ENCODE measurements at regions of chr1 and their contacts with region 1.

Region 1: DNA sequence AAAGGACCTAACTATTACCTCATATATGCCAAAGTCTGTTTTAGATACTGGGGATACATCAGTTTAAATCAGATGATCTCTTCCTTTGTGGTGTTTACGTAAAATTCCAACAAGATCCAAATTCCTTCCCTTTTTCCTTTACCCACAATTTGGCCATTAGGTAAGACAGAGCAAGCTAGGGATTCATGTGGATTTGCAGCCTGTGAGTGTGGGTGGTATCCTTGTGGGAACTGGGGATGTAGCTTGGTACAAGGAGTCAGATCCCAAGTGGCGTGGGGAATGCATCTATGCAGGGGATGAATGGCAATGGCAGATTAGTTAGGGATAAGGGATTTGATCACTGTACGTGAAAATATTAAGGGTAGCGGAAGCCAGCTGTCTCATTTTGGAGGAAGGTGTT is 9.8 kb upstream of the STRIP1 start:
- DNase-seq: no peak
- ATAC-seq: no peak
- H3K4me3 ChIP-seq: no peak overlapping the region
- H3K4me3 Mint-ChIP-seq: no peak overlapping the region
- H3K27ac ChIP-seq: no peak overlapping the region
- H3K27ac Mint-ChIP-seq: no peak overlapping the region
- H3K4me1 ChIP-seq: peaks cover 3% of the 10 kb centered on the region
- H3K4me1 Mint-ChIP-seq: peaks cover 2% of the 10 kb centered on the region
- H3K27me3 ChIP-seq: no peaks in the 10 kb centered on the region
- H3K27me3 Mint-ChIP-seq: no peaks in the 10 kb centered on the region
- CTCF ChIP-seq: no peak

Region 2: DNA sequence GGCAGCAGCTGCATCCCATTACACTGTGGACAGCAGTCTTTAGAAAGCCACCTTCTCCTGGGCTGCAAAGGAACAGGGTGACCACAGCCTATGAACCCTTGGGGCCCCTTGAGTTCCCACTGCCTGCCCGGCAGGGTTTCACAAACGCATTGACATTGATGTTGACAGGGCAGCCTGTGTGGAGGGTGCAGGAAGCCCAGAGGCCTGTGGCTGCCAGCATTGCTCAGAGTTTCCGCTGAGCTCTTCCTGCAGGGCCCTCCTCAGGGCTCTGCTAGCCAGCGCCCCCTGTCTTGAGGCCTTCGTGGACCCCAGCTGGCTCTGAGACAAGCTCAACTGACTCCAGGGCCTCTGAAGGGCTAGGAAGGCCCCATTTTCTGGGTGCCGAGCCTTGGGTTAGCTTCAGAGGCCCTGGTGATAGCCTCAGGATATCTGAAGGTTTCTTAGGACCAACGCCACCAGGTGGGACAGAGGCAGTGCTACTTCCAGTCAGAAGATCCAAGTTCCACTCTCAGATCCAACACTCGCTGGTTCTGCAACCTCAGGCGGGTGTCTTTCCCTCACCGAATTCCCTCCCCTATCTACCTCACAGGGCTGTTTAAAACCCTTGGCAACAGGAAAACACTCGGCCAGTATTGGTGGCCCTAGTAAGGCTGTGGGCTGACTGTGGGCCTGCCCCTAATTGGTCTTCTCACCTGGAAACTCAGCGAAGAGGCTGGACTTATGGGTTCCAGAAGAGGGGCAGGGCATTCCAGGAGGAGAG is 233.7 kb before region 1 on chr1:
- CTCF ChIA-PET with region 1: no interaction called
- POLR2A ChIA-PET with region 1: no interaction called
- intact Hi-C with region 1: no loop called
- DNase-seq: peak; percentile 51 to 90 (median 70)
- ATAC-seq: peak; percentile 95
- H3K4me3 ChIP-seq: no peak overlapping the region
- H3K4me3 Mint-ChIP-seq: peak overlapping the region; percentile 48
- H3K27ac ChIP-seq: peak overlapping the region; percentile 32 to 69
- H3K27ac Mint-ChIP-seq: peak overlapping the region; percentile 66
- H3K4me1 ChIP-seq: peaks cover 81% of the 10 kb centered on the region
- H3K4me1 Mint-ChIP-seq: peaks cover 60% of the 10 kb centered on the region
- H3K27me3 ChIP-seq: no peaks in the 10 kb centered on the region
- H3K27me3 Mint-ChIP-seq: no peaks in the 10 kb centered on the region
- CTCF ChIP-seq: peak; percentile 76

Region 3: DNA sequence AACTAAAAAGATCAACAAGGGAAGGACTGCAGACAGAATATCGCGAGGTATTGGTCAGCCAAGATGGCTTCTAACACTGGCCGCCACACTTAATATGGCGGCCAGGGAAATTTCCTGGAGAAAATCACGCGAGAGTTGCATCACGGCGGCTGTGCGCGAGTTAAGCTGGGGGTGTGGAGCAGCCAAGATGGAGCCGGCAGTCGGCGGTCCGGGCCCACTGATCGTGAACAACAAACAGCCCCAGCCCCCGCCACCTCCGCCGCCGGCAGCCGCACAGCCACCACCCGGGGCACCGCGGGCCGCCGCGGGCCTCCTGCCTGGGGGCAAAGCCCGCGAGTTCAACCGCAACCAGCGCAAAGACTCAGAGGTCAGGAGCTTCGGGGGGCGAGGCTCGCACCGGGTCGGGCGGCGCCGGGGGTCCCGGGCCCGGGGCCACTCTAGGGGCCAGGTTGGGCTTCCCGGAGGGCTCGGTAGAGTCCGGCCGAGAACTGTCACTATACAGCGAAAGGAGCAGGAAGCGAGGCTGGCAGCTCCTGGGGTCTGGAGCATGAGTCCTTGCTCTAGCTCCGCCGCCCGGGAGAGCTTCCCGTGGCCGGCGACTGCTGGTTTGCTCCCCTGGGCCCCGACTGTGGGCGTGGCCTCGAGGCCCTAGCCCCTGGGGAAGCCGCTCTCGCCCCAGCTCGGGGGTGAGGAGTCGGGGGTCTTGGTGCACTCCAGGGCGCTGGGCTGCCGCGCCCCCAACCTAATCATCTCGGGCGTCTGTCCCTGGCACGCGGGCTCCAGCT is 10.0 kb after region 1 on chr1 and contains the start of gene STRIP1:
- CTCF ChIA-PET with region 1: interaction called, 3 read pairs
- POLR2A ChIA-PET with region 1: interaction called, 12 read pairs
- intact Hi-C with region 1: no loop called
- DNase-seq: peak; percentile 85 to 98 (median 89)
- ATAC-seq: peak; percentile 95
- H3K4me3 ChIP-seq: peak within 1 kb of the TSS; percentile 84
- H3K4me3 Mint-ChIP-seq: peak within 1 kb of the TSS; percentile 98
- H3K27ac ChIP-seq: peak within 1 kb of the TSS; percentile 37 to 64
- H3K27ac Mint-ChIP-seq: peak within 1 kb of the TSS; percentile 81
- H3K4me1 ChIP-seq: peaks cover 41% of the 10 kb centered on the region
- H3K4me1 Mint-ChIP-seq: peaks cover 56% of the 10 kb centered on the region
- H3K27me3 ChIP-seq: no peaks in the 10 kb centered on the region
- H3K27me3 Mint-ChIP-seq: no peaks in the 10 kb centered on the region
- CTCF ChIP-seq: no peak
- total RNA-seq, gene STRIP1: 74.3 to 80.9 TPM